IMR-90 (cell line): ENCODE measurements at regions of chr16 and their contacts with region 1.

Region 1: GRCh38 chr16:1054660-1055556 is 17.6 kb upstream of the SSTR5 start:
- DNase-seq: peak; percentile 29
- ATAC-seq: peak; percentile 97
- H3K4me3 ChIP-seq: no peak overlapping the region
- H3K27ac ChIP-seq: no peak overlapping the region
- H3K4me1 ChIP-seq: no peaks in the 10 kb centered on the region
- H3K27me3 ChIP-seq: peaks cover 13% of the 10 kb centered on the region; the same call in 1 of the 2 replicates
- CTCF ChIP-seq: peak; percentile 80
- POLR2A ChIP-seq: no peak
- RAD21 ChIP-seq: peak; percentile 86

Region 2: GRCh38 chr16:714558-715476 is 340.1 kb before region 1 on chr16 and contains the start of gene METRN:
- CTCF ChIA-PET with region 1: no interaction called
- POLR2A ChIA-PET with region 1: no interaction called
- dilution Hi-C with region 1: no loop called
- in situ Hi-C with region 1: loop called (anchors 25 kb)
- intact Hi-C with region 1: loop called (anchors 2 kb)
- DNase-seq: peak; percentile 78
- ATAC-seq: peak; percentile 83
- H3K4me3 ChIP-seq: peak within 1 kb of the TSS; percentile 70
- H3K27ac ChIP-seq: no peak within 1 kb of the TSS; the same call in 1 of the 2 replicates
- H3K4me1 ChIP-seq: peaks cover 14% of the 10 kb centered on the region
- H3K27me3 ChIP-seq: no peaks in the 10 kb centered on the region
- CTCF ChIP-seq: no peak
- POLR2A ChIP-seq: no peak
- RAD21 ChIP-seq: no peak
- total RNA-seq, gene METRN: 6.1 and 8.6 TPM in 2 replicates

Region 3: DNA sequence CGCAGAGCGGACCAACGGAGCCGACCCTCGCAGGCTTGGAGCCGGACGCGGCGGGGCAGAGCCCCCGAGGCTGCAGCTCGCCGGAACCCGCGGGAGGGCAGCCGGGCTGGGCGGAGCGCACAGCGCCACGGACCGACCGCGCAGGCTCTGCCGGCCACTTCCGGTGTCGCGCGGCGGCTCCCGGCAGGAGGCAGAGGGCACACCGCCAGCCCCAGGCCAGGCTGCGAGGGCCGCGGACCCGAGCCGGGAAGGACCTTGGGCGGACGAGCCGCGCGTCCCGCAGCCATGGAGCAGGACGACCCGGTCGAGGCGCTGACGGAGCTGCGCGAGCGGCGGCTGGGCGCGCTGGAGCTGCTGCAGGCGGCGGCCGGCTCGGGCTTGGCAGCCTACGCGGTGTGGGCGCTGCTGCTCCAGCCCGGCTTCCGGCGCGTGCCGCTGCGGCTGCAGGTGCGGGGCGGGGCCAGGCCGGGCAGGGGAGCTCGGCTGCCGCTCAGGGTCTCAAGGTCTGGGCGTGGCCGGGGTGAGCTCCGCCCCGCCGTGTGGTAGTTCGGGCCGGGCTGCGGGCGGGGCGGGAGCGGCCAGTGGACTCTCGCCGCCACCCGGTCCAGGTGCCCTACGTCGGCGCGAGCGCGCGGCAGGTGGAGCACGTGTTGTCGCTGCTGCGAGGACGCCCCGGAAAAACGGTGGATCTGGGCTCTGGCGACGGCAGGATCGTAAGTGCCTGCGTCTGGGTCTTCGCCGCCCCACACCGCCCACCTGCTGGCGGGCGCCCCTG is 333.7 kb before region 1 on chr16 and contains the start of gene ANTKMT:
- CTCF ChIA-PET with region 1: no interaction called
- POLR2A ChIA-PET with region 1: no interaction called
- dilution Hi-C with region 1: no loop called
- in situ Hi-C with region 1: loop called (anchors 25 kb)
- intact Hi-C with region 1: no loop called
- DNase-seq: peak; percentile 64
- ATAC-seq: peak; percentile 88
- H3K4me3 ChIP-seq: peak within 1 kb of the TSS; percentile 98
- H3K27ac ChIP-seq: peak within 1 kb of the TSS; percentile 97
- H3K4me1 ChIP-seq: peaks cover 13% of the 10 kb centered on the region
- H3K27me3 ChIP-seq: no peaks in the 10 kb centered on the region
- CTCF ChIP-seq: no peak
- POLR2A ChIP-seq: 0 out of 2 replicates have a peak, but pooled peaks have one; percentile 10
- RAD21 ChIP-seq: no peak
- total RNA-seq, gene ANTKMT: 7.3 and 7.5 TPM in 2 replicates

Region 4: DNA sequence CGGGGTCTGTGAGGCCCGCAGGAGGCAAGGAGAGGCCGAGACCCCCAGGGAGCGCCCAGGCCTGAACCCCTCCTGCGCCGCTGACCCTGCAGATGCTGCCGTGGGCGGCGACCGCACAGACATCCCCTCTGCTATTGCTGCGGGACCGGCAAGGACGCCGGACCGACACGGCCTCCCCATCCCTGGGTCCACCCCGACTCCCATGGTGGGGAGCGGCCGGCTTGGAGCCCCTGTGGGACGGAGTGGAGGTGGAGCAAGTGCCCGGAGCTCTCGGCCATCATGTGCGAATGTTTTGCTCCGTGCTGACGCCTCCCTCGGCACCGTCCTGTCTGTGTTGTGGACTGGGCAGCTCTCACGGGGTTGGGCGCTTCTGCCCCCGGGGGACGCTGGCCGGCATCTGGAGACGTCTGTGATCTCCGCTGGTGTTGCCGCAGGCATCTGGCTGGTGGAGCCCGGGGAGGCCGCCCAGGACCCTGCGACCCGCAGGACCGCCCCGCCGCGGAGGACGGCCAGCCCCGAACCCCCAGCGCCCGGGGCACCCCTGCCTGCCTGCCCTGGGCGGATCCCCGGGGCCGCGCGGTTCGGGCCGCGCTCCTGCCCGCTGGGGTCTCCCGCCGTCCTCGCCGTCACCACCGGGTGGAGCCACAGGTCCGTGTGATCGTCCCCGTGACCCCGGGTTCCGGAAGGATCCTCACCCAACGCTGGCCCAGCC is 241.5 kb before region 1 on chr16:
- CTCF ChIA-PET with region 1: no interaction called
- POLR2A ChIA-PET with region 1: no interaction called
- dilution Hi-C with region 1: no loop called
- in situ Hi-C with region 1: loop called (anchors 5 kb)
- intact Hi-C with region 1: loop called (anchors 1 kb)
- DNase-seq: peak; percentile 8
- ATAC-seq: peak; percentile 82
- H3K4me3 ChIP-seq: no peak overlapping the region
- H3K27ac ChIP-seq: no peak overlapping the region
- H3K4me1 ChIP-seq: peaks cover 4% of the 10 kb centered on the region; the same call in 1 of the 2 replicates
- H3K27me3 ChIP-seq: peaks cover 15% of the 10 kb centered on the region
- CTCF ChIP-seq: peak; percentile 72
- POLR2A ChIP-seq: no peak
- RAD21 ChIP-seq: peak; percentile 82

Region 5: GRCh38 chr16:1105888-1106620 is 51.1 kb after region 1 on chr16:
- CTCF ChIA-PET with region 1: no interaction called
- POLR2A ChIA-PET with region 1: no interaction called
- dilution Hi-C with region 1: no loop called
- in situ Hi-C with region 1: no loop called
- intact Hi-C with region 1: loop called (anchors 2 kb)
- DNase-seq: peak; percentile 33
- ATAC-seq: peak; percentile 94
- H3K4me3 ChIP-seq: no peak overlapping the region
- H3K27ac ChIP-seq: no peak overlapping the region
- H3K4me1 ChIP-seq: 0 out of 2 replicates have a peak, but pooled peaks cover 2% of the 10 kb centered on the region
- H3K27me3 ChIP-seq: peaks cover 47% of the 10 kb centered on the region
- CTCF ChIP-seq: peak; percentile 96
- POLR2A ChIP-seq: 0 out of 2 replicates have a peak, but pooled peaks have one; percentile 29
- RAD21 ChIP-seq: peak; percentile 98